ENCODE measurements at regions of chr7 and their contacts with region 1.

Region 1: GRCh38 chr7:66557608-66558143 is 71.0 kb upstream of the KCTD7 start:
- DNase-seq: peak; percentile 57 to 63
- H3K4me3 ChIP-seq: no peak overlapping the region
- H3K27ac ChIP-seq: no peak overlapping the region
- H3K4me1 ChIP-seq: peaks cover 0 to 7% of the 10 kb centered on the region in 2 donors
- H3K27me3 ChIP-seq: no peaks in the 10 kb centered on the region
- CTCF ChIP-seq: peak; percentile 75 to 99 (median 84)
- POLR2A ChIP-seq: no peak

Region 2: GRCh38 chr7:66654123-66654732 is 96.6 kb after region 1 on chr7:
- intact Hi-C with region 1: loop called (anchors 5 kb)
- DNase-seq: peak; percentile 99
- H3K4me3 ChIP-seq: peak overlapping the region; percentile 80 to 81 (median 80)
- H3K27ac ChIP-seq: peak overlapping the region; percentile 92 to 98 (median 96)
- H3K4me1 ChIP-seq: peaks cover 6 to 14% of the 10 kb centered on the region in 2 donors
- H3K27me3 ChIP-seq: no peaks in the 10 kb centered on the region
- CTCF ChIP-seq: peak in 4 of 6 experiments; percentile 11 to 29 (median 21)
- POLR2A ChIP-seq: peak; percentile 79 to 99

Measured in thyroid gland (tissue), 4 donors.